Mammary epithelial cell (primary cell): ENCODE measurements at regions of chr5 and their contacts with region 1.

Region 1: GRCh38 chr5:88140856-88141752 is 127.5 kb downstream of the TMEM161B start:
- DNase-seq: peak; percentile 95
- H3K4me3 ChIP-seq: peak overlapping the region; percentile 39 to 47 (median 42)
- H3K27ac ChIP-seq: no peak overlapping the region
- H3K4me1 ChIP-seq: peaks cover 21% of the 10 kb centered on the region
- H3K27me3 ChIP-seq: peaks cover 12% of the 10 kb centered on the region
- CTCF ChIP-seq: peak; percentile 47 to 63

Region 2: DNA sequence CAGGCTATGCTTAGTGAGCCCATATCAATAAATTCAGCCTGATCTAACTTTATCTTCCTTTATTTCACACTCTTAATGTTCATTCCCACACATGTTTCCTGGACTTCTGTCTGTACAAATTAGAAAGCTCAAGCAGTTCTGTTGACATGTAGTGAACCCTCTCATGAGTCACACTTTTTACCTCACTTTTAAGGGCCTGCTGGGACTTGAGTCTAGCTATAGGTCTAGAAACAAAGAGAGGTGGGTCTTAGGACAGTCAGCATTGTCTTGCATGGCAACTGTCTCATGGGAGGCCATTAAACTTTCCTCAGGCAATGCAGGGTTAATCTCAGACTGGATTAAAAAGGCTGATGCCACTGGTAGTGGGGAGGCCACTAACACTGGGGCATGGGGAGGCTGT is 719.8 kb before region 1 on chr5:
- CTCF ChIA-PET with region 1: interaction called, 10 read pairs
- dilution Hi-C with region 1: no loop called
- in situ Hi-C with region 1: loop called in 1 of 2 experiments (anchors 10 kb)
- intact Hi-C with region 1: loop called (anchors 5 kb)
- DNase-seq: peak; percentile 81
- H3K4me3 ChIP-seq: no peak overlapping the region
- H3K27ac ChIP-seq: peak overlapping the region; percentile 51
- H3K4me1 ChIP-seq: peaks cover 14% of the 10 kb centered on the region
- H3K27me3 ChIP-seq: no peaks in the 10 kb centered on the region
- CTCF ChIP-seq: no peak

Region 3: GRCh38 chr5:87541033-87541432 is 600.1 kb before region 1 on chr5:
- CTCF ChIA-PET with region 1: no interaction called
- dilution Hi-C with region 1: no loop called
- in situ Hi-C with region 1: no loop called
- intact Hi-C with region 1: loop called (anchors 5 kb)
- DNase-seq: peak; percentile 63
- H3K4me3 ChIP-seq: no peak overlapping the region
- H3K27ac ChIP-seq: no peak overlapping the region
- H3K4me1 ChIP-seq: no peaks in the 10 kb centered on the region
- H3K27me3 ChIP-seq: no peaks in the 10 kb centered on the region
- CTCF ChIP-seq: peak; percentile 31 to 48

Region 4: DNA sequence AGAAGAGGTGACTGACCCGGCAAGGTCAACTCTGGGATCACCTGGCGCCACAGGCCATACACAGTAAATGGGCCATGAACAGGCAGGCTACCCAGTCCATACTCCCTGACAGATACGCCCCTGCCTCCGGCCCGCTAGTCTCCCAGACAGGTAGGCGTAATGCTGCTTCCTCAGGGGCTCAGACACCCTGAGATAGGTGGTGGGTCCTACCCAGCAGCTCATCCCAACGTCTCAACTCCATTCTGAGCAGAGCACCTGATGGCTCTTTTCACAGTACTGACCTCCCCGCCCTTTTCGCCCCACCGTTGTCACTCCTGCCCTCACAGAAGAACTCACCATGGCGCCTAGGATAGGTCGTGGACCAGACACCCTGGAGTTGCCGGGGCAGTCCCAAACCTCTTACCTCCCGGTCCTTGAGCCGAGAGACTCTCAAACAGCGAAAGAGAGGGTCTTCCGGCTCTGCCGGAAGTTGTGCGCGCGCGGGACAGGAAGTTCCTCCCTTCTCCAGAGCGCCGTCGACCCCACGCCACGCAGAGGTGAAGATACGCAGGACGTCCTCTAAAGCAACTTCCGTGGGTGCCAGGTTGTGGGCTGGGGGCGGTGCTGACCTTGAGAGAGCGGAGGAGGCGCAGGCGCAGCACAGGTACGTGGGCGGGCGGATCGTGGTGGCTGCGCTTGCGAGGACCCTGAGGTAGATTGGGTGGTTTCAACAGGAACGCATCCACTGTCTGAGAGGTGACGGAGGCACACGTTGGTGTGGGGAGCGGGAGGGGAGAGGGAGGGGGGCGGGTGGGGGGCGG is 127.5 kb after region 1 on chr5 and contains the start of gene TMEM161B:
- CTCF ChIA-PET with region 1: no interaction called
- dilution Hi-C with region 1: no loop called
- in situ Hi-C with region 1: no loop called
- intact Hi-C with region 1: loop called (anchors 2 kb)
- DNase-seq: peak; percentile 92
- H3K4me3 ChIP-seq: peak within 1 kb of the TSS; percentile 61 to 93 (median 89)
- H3K27ac ChIP-seq: peak within 1 kb of the TSS; percentile 52
- H3K4me1 ChIP-seq: peaks cover 14% of the 10 kb centered on the region
- H3K27me3 ChIP-seq: no peaks in the 10 kb centered on the region
- CTCF ChIP-seq: no peak
- total RNA-seq, gene TMEM161B: 14.4 to 14.8 TPM

Region 5: GRCh38 chr5:88490874-88491273 is 349.8 kb after region 1 on chr5:
- CTCF ChIA-PET with region 1: interaction called, 17 read pairs
- dilution Hi-C with region 1: no loop called
- in situ Hi-C with region 1: no loop called
- intact Hi-C with region 1: no loop called
- DNase-seq: no peak
- H3K4me3 ChIP-seq: no peak overlapping the region
- H3K27ac ChIP-seq: no peak overlapping the region
- H3K4me1 ChIP-seq: no peaks in the 10 kb centered on the region
- H3K27me3 ChIP-seq: peaks cover 3% of the 10 kb centered on the region
- CTCF ChIP-seq: no peak

Region 6: GRCh38 chr5:88680253-88681132 is 539.4 kb after region 1 on chr5:
- CTCF ChIA-PET with region 1: no interaction called
- dilution Hi-C with region 1: no loop called
- in situ Hi-C with region 1: loop called (anchors 25 kb)
- intact Hi-C with region 1: loop called (anchors 1 kb)
- DNase-seq: peak; percentile 35
- H3K4me3 ChIP-seq: peak overlapping the region; percentile 30 to 42 (median 41)
- H3K27ac ChIP-seq: no peak overlapping the region
- H3K4me1 ChIP-seq: peaks cover 8% of the 10 kb centered on the region
- H3K27me3 ChIP-seq: peaks cover 66% of the 10 kb centered on the region
- CTCF ChIP-seq: peak; percentile 55 to 97

Region 7: DNA sequence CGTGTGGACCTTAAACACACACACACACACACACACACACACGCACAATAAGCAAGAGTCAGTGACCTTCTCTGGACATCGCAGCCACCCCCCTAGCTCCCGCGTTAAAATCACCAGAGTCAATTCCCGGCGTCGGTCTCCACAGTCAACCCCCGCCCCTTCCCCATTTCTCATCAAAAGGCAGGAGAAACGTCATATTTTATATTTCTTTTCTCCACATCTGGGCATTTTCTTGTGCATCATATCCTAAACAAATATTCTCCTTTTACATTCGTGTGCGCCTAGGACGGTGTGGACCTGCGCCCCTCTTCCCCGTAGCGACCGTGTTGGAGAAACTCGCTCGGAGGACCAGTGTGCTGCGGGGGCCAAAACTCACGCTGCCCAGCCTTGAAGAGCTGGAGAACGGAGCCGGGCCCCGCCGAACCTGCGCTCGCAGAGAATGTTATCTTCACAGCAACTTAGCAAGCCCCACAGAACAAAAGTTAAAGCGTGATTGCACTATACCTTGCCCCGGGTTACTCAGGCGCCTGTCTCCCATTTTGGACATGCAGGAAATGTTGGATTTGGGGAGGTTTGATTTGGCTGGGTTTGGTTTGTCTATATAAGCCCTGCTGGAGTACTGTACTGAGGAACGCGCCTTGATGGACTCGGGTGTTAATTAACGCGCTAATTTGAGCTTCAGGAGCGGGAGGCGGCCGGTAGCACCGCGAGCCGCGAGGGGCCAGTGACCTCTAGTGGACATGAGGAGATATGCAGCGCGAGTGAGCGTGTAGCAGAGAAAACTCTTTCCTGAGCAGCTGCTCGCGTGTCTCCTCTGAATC is 549.5 kb after region 1 on chr5:
- CTCF ChIA-PET with region 1: no interaction called
- dilution Hi-C with region 1: no loop called
- in situ Hi-C with region 1: loop called (anchors 25 kb)
- intact Hi-C with region 1: loop called (anchors 2 kb)
- DNase-seq: peak; percentile 32
- H3K4me3 ChIP-seq: no peak overlapping the region
- H3K27ac ChIP-seq: no peak overlapping the region
- H3K4me1 ChIP-seq: no peaks in the 10 kb centered on the region
- H3K27me3 ChIP-seq: peaks cover 93% of the 10 kb centered on the region
- CTCF ChIP-seq: peak; percentile 93 to 97